ENCODE measurements at regions of chr11 and their contacts with region 1.

Region 1: DNA sequence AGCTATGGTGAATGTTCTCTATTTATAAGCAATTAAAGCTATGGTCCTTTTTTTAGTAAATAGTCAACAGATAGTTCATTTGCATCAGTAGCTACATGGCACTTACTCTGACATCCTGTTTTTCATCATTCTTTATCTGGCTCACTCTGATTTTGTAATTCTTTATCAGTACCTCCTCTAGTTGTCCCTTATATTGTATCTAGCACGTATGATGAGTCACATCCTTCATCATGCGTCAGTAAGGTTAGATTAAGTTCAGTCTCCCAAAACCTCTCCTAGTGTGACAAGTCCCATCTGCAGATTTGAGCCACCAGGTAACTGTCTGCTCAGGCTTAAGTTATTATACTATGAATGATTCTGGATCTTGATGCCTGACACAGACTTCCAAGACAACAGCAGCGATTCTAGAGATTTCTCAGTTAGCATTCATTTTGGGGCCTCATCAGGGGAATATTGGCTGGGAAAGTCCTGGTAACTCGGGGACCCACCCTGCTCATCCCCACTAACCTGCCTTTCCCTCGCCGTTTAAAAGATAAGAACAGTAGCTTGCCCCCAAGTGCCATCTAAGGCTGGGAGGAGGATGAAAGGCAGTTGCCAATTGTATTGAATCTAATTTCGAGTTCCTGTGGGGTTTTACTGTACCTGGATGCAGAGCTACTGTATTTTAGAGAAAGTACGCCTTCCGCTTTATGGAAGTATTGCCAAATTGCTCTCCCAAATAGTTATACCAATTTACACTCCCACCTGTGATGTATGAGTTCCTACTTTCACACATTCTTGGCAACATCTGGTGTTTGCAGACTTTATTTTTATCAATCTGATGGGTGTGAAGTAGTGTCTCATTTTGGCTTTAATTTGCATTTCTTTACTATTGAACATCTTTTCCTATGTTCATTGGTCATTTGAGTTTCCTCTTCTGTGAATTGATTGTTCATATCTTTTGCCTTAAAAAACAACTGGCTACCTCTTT is 55.9 kb downstream of the ZC3H12C start:
- DNase-seq: no peak
- ATAC-seq: peak; percentile 67
- H3K4me3 ChIP-seq: no peak overlapping the region
- H3K27ac ChIP-seq: no peak overlapping the region
- H3K4me1 ChIP-seq: no peaks in the 10 kb centered on the region
- H3K27me3 ChIP-seq: no peaks in the 10 kb centered on the region
- CTCF ChIP-seq: no peak
- EP300 ChIP-seq: no peak
- POLR2A ChIP-seq: no peak
- RAD21 ChIP-seq: no peak

Region 2: GRCh38 chr11:109071712-109072524 is 1077.1 kb before region 1 on chr11:
- CTCF ChIA-PET with region 1: no interaction called
- POLR2A ChIA-PET with region 1: no interaction called
- RAD21 ChIA-PET with region 1: no interaction called
- SMC1A ChIA-PET with region 1: no interaction called
- in situ Hi-C with region 1: no loop called
- intact Hi-C with region 1: no loop called
- DNase-seq: no peak
- ATAC-seq: no peak
- H3K4me3 ChIP-seq: no peak overlapping the region
- H3K27ac ChIP-seq: no peak overlapping the region
- H3K4me1 ChIP-seq: no peaks in the 10 kb centered on the region
- H3K27me3 ChIP-seq: no peaks in the 10 kb centered on the region; a peak in 1 of 4 replicates
- CTCF ChIP-seq: no peak
- EP300 ChIP-seq: no peak
- POLR2A ChIP-seq: no peak
- RAD21 ChIP-seq: no peak

Region 3: GRCh38 chr11:110134110-110134509 is 14.9 kb before region 1 on chr11:
- CTCF ChIA-PET with region 1: interaction called, 5 read pairs
- POLR2A ChIA-PET with region 1: interaction called, 6 read pairs
- RAD21 ChIA-PET with region 1: no interaction called
- SMC1A ChIA-PET with region 1: interaction called, 10 read pairs
- in situ Hi-C with region 1: no loop called
- intact Hi-C with region 1: no loop called
- DNase-seq: no peak
- ATAC-seq: no peak
- H3K4me3 ChIP-seq: no peak overlapping the region
- H3K27ac ChIP-seq: no peak overlapping the region
- H3K4me1 ChIP-seq: no peaks in the 10 kb centered on the region
- H3K27me3 ChIP-seq: no peaks in the 10 kb centered on the region
- CTCF ChIP-seq: no peak
- EP300 ChIP-seq: no peak
- POLR2A ChIP-seq: no peak
- RAD21 ChIP-seq: no peak

Region 4: DNA sequence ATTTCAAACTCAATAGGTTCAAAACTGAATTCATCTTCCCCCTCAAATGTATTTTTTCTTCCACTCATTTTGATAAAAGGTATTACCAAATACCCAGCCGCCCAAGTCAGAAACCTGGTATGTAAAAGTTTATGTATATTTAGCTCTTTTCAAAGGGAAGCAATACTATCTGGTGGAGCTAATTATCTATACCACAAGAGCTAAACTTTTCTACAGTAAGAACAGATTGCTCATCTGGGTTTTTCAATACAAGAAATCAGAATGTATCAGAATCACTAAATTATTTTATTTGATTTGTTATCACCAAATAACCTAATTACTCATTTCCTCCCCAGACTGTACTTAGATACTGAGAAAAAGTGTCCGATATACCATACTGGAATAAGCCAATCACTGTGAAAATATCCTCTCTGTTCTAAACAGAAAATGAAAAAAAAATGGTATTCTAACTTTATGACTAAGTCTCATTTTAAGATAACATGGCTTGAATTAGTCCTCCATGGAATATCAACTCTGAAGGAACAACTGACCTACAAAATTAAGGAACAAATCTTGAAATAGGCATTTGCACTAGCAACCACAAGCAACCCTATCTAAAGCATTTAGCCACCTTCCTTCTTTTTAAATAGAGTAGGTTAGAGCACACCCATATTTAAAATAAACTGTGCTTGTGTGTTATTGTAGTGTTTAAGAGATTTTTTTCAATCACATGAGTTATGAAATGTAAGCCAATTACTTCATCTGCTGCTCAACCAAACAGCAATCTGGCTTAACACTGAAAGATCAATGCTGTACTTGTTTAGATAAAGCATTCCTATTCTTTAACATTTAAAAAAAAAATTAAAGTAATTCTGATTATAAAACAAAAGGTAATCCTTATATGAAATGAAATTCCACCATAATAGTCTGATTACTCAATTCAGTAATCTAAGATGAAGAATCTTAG is 112.4 kb after region 1 on chr11:
- CTCF ChIA-PET with region 1: no interaction called
- POLR2A ChIA-PET with region 1: no interaction called
- RAD21 ChIA-PET with region 1: no interaction called
- SMC1A ChIA-PET with region 1: no interaction called
- in situ Hi-C with region 1: no loop called
- intact Hi-C with region 1: no loop called
- DNase-seq: no peak
- ATAC-seq: no peak
- H3K4me3 ChIP-seq: no peak overlapping the region
- H3K27ac ChIP-seq: no peak overlapping the region
- H3K4me1 ChIP-seq: no peaks in the 10 kb centered on the region
- H3K27me3 ChIP-seq: no peaks in the 10 kb centered on the region
- CTCF ChIP-seq: no peak
- EP300 ChIP-seq: no peak
- POLR2A ChIP-seq: no peak
- RAD21 ChIP-seq: no peak

Measured in GM12878 (cell line).